Activated naive CD4-positive, alpha-beta T cell treated with anti-CD3 and anti-CD28 coated beads for 36 hours (primary cell): ENCODE measurements at regions of chr4 and their contacts with region 1.

Region 1: GRCh38 chr4:173334085-173334772 is at the start of gene HMGB2:
- DNase-seq: peak; percentile 100
- H3K4me3 Mint-ChIP-seq: peak within 1 kb of the TSS; percentile 99
- H3K27ac Mint-ChIP-seq: peak within 1 kb of the TSS; percentile 99
- H3K4me1 Mint-ChIP-seq: peaks cover 15% of the 10 kb centered on the region
- H3K27me3 Mint-ChIP-seq: peaks cover 12% of the 10 kb centered on the region
- total RNA-seq, gene HMGB2: 752 to 787 TPM

Region 2: GRCh38 chr4:173074501-173074946 is 259.7 kb before region 1 on chr4:
- CTCF ChIA-PET with region 1: no interaction called
- intact Hi-C with region 1: no loop called
- DNase-seq: no peak
- H3K4me3 Mint-ChIP-seq: no peak overlapping the region
- H3K27ac Mint-ChIP-seq: no peak overlapping the region
- H3K4me1 Mint-ChIP-seq: no peaks in the 10 kb centered on the region
- H3K27me3 Mint-ChIP-seq: no peaks in the 10 kb centered on the region

Region 3: GRCh38 chr4:173346074-173346473 is 11.8 kb after region 1 on chr4:
- CTCF ChIA-PET with region 1: no interaction called
- intact Hi-C with region 1: loop called (anchors 2 kb)
- DNase-seq: no peak
- H3K4me3 Mint-ChIP-seq: no peak overlapping the region
- H3K27ac Mint-ChIP-seq: no peak overlapping the region
- H3K4me1 Mint-ChIP-seq: no peaks in the 10 kb centered on the region
- H3K27me3 Mint-ChIP-seq: peaks cover 13% of the 10 kb centered on the region

Region 4: DNA sequence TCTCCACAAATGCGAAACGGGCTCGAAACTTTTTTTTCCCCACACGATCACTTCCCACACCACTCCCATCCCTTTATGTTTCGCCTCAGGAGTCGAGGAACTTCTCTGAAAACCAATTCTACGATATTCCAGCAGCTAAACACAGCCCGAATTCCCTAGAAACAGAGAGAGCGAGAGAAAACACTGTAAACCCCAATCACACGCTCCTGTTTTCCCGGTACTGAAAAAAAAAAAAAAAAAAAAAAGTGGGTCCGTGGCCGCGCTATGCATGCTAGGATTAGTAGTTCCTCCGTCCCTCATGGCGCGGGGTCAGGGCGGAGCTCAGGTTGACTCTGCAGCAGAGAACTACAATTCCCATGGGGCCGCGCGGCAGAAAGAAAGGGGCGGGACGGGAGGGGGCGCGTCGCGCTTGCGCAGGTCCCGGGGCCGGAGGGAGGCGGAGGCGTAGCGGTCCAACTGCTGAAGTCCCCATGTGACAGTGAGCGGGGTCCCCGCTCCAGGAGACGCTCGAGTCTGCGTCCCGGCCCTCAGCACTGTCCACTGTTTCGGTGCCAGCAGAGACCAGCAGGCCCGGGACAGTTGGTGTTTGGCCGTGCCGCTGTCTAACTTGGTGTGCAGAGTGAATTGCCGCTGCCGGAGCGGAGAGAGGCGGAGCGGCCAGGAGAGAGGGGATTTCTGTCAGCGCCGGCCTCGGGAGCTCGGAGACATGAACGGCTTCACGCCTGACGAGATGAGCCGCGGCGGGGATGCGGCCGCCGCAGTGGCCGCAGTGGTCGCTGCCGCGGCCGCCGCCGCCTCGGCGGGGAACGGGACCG is 36.5 kb after region 1 on chr4 and contains the start of gene SAP30:
- CTCF ChIA-PET with region 1: interaction called, 22 read pairs
- intact Hi-C with region 1: loop called (anchors 1 kb)
- DNase-seq: peak; percentile 98
- H3K4me3 Mint-ChIP-seq: peak within 1 kb of the TSS; percentile 99
- H3K27ac Mint-ChIP-seq: peak within 1 kb of the TSS; percentile 99
- H3K4me1 Mint-ChIP-seq: peaks cover 18% of the 10 kb centered on the region
- H3K27me3 Mint-ChIP-seq: peaks cover 20% of the 10 kb centered on the region
- total RNA-seq, gene SAP30: 9.2 to 9.7 TPM